K562 (cell line): ENCODE measurements at regions of chr4 and their contacts with region 1.

Region 1: GRCh38 chr4:172105918-172106317 is 292.7 kb downstream of the GALNTL6 start:
- DNase-seq: peak in 2 of 4 experiments; percentile 18 to 30
- ATAC-seq: peak; percentile 66; the same call in 2 of the 3 replicates
- H3K4me3 ChIP-seq: no peak overlapping the region
- H3K27ac ChIP-seq: no peak overlapping the region
- H3K4me1 ChIP-seq: no peaks in the 10 kb centered on the region
- H3K27me3 ChIP-seq: no peaks in the 10 kb centered on the region
- CTCF ChIP-seq: no peak
- EP300 ChIP-seq: no peak
- POLR2A ChIP-seq: no peak
- RAD21 ChIP-seq: no peak

Region 2: DNA sequence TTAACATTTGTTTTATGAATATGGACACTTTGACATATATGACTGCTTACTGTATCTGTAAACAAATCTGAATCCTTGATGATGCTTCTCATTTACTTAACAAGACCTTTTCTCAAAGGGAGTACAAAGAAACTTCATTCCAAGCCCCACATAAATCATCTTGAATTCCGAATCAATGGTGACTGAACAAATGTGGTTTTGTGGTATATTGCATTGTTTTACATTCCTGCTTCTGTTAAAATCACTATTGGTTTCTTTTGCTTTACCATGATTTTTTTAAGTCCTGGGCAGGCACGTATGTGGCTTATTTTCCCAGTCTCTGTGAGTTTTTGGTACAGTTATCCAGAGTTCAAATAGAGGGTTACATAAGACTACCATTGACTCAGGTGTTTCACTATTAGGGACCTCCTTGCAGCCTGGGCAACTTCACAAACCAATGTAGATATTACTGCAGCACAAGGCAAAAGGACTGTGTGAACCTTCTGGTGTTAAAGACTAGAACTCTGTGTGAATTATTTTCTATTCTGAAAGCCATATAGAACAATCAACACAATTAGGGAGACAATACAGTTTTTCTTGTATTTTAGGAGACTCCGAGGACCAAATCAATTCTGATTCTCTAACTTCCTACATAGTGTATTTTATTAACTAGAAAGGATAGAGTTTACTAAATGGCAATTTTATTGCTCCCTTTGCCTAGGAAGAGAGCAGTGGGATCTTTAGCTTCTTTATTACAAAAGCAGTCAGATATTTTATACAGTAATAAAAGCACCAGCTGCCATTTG is 96.3 kb before region 1 on chr4:
- CTCF ChIA-PET with region 1: no interaction called
- POLR2A ChIA-PET with region 1: no interaction called
- in situ Hi-C with region 1: no loop called
- intact Hi-C with region 1: no loop called
- DNase-seq: no peak
- ATAC-seq: no peak
- H3K4me3 ChIP-seq: no peak overlapping the region
- H3K27ac ChIP-seq: no peak overlapping the region
- H3K4me1 ChIP-seq: no peaks in the 10 kb centered on the region
- H3K27me3 ChIP-seq: no peaks in the 10 kb centered on the region
- CTCF ChIP-seq: no peak
- EP300 ChIP-seq: no peak
- POLR2A ChIP-seq: no peak
- RAD21 ChIP-seq: no peak

Region 3: GRCh38 chr4:172088556-172088955 is 17.4 kb before region 1 on chr4:
- CTCF ChIA-PET with region 1: no interaction called
- POLR2A ChIA-PET with region 1: no interaction called
- in situ Hi-C with region 1: no loop called
- intact Hi-C with region 1: loop called (anchors 2 kb)
- DNase-seq: peak in 2 of 4 experiments; percentile 21 to 43
- ATAC-seq: peak; percentile 67; the same call in 1 of the 3 replicates
- H3K4me3 ChIP-seq: no peak overlapping the region
- H3K27ac ChIP-seq: no peak overlapping the region
- H3K4me1 ChIP-seq: 0 out of 5 replicates have a peak, but pooled peaks cover 0 to 3% of the 10 kb centered on the region in 2 experiments
- H3K27me3 ChIP-seq: no peaks in the 10 kb centered on the region
- CTCF ChIP-seq: no peak
- EP300 ChIP-seq: no peak
- POLR2A ChIP-seq: no peak
- RAD21 ChIP-seq: no peak